ENCODE measurements at regions of chr17 and their contacts with region 1.

Region 1: GRCh38 chr17:81959362-81960129 is 1.4 kb downstream of the NOTUM start:
- DNase-seq: peak; percentile 53
- H3K4me3 ChIP-seq: peak overlapping the region; percentile 26 to 38
- H3K27ac ChIP-seq: no peak overlapping the region
- H3K4me1 ChIP-seq: peaks cover 2% of the 10 kb centered on the region
- H3K27me3 ChIP-seq: peaks cover 8% of the 10 kb centered on the region
- CTCF ChIP-seq: peak; percentile 82 to 100 (median 93)
- POLR2A ChIP-seq: no peak

Region 2: GRCh38 chr17:81911277-81911961 is 48.1 kb before region 1 on chr17 and contains the start of gene PCYT2:
- intact Hi-C with region 1: no loop called
- DNase-seq: peak; percentile 95
- H3K4me3 ChIP-seq: peak within 1 kb of the TSS; percentile 76 to 78
- H3K27ac ChIP-seq: peak within 1 kb of the TSS; percentile 69 to 77
- H3K4me1 ChIP-seq: peaks cover 6% of the 10 kb centered on the region
- H3K27me3 ChIP-seq: no peaks in the 10 kb centered on the region
- CTCF ChIP-seq: peak in 2 of 4 experiments; percentile 39 to 51
- POLR2A ChIP-seq: no peak
- total RNA-seq, gene PCYT2: 51.4 to 69.2 TPM

Region 3: DNA sequence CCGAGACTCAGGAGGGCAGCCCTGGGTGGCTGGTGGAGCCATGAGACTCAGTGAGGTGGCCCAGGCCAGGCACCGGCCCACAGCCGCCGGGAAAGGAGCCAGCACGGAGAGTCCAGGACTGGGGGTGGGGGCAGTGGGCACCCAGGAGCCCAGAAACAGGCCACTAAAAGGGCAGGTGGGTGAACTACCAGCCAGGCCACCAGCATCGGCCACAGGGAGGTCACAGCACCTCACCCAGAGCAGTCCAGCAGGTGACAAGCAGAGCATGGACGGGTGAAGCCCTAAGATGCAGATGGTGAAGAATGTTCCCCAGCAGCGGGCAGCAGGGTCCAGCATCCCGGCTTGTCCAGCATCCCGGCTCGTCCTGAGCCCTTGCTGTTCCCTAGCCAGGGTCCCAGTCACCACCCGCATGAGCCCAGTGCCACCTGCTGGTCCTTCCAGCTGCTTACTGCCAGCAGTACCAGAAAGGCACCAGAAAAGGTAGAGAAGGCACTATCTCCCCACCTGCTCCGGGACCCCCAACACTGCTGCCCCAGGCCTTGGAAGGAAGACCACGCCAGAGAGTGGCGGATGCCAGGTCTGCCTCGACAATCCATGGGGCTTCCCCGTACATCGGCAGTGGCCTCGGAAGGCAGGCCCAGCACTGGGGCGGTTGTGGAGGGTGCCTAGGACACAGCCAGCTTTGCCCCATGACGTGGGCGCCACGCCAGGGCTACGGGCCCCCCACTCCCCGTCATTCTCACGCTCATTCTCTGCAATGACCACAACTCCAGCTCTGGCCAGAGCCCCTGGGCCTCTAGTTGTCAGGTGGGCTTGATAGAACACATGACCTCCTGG is 61.6 kb after region 1 on chr17:
- intact Hi-C with region 1: loop called (anchors 2 kb)
- DNase-seq: peak; percentile 72
- H3K4me3 ChIP-seq: peak overlapping the region in 1 of 2 donors; percentile 85
- H3K27ac ChIP-seq: peak overlapping the region in 1 of 2 donors; percentile 39
- H3K4me1 ChIP-seq: peaks cover 18% of the 10 kb centered on the region
- H3K27me3 ChIP-seq: no peaks in the 10 kb centered on the region
- CTCF ChIP-seq: peak; percentile 50 to 93 (median 72)
- POLR2A ChIP-seq: no peak

Region 4: GRCh38 chr17:82153745-82154375 is 194.3 kb after region 1 on chr17:
- intact Hi-C with region 1: loop called (anchors 10 kb)
- DNase-seq: peak; percentile 83
- H3K4me3 ChIP-seq: no peak overlapping the region
- H3K27ac ChIP-seq: peak overlapping the region; percentile 94 to 96
- H3K4me1 ChIP-seq: peaks cover 24% of the 10 kb centered on the region
- H3K27me3 ChIP-seq: no peaks in the 10 kb centered on the region
- CTCF ChIP-seq: peak; percentile 95 to 99 (median 97)
- POLR2A ChIP-seq: no peak

Region 5: DNA sequence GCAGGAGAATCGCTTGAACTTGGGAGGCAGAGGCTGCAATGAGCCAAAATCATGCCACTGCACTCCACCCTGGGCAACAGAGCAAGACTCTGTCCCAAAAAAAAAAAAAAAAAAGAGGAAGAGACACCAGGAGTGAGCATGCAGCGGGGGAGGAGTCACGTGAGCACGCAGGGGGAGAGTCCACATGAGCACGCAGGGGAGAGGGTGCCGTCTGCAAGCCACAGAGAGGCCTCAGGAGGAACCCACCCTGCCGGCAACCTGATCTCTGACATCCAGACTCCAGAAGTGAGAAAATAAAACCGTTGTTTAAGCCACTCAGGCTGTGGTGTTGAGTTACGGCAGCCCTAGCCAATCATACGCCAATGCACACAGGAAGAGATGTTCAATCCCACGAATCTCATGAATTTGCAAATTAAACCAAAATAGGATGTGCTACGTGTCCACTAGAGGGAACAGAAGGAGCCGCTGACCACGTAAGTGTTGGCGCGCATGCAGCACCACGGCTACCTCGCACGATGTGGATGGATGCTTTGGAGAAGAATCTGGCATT is 210.9 kb after region 1 on chr17:
- intact Hi-C with region 1: no loop called
- DNase-seq: no peak
- H3K4me3 ChIP-seq: no peak overlapping the region
- H3K27ac ChIP-seq: no peak overlapping the region
- H3K4me1 ChIP-seq: no peaks in the 10 kb centered on the region
- H3K27me3 ChIP-seq: no peaks in the 10 kb centered on the region
- CTCF ChIP-seq: no peak
- POLR2A ChIP-seq: no peak

Measured in prostate gland (tissue), 2 donors.